Left cardiac atrium (tissue), 4 donors: ENCODE measurements at regions of chr10 and their contacts with region 1.

Region 1: GRCh38 chr10:11270135-11270857 is 252.6 kb downstream of the CELF2 start:
- DNase-seq: peak; percentile 84
- ATAC-seq: peak; percentile 96

Region 2: GRCh38 chr10:9608602-9609001 is 1661.7 kb before region 1 on chr10:
- intact Hi-C with region 1: loop called in 1 of 2 experiments (anchors 5 kb)
- DNase-seq: no peak
- ATAC-seq: no peak

Region 3: GRCh38 chr10:10722422-10722821 is 547.9 kb before region 1 on chr10:
- intact Hi-C with region 1: loop called in 1 of 2 experiments (anchors 10 kb)
- DNase-seq: no peak
- ATAC-seq: no peak

Region 4: GRCh38 chr10:10959666-10960065 is 310.6 kb before region 1 on chr10:
- intact Hi-C with region 1: loop called in 1 of 2 experiments (anchors 10 kb)
- DNase-seq: no peak
- ATAC-seq: no peak

Region 5: DNA sequence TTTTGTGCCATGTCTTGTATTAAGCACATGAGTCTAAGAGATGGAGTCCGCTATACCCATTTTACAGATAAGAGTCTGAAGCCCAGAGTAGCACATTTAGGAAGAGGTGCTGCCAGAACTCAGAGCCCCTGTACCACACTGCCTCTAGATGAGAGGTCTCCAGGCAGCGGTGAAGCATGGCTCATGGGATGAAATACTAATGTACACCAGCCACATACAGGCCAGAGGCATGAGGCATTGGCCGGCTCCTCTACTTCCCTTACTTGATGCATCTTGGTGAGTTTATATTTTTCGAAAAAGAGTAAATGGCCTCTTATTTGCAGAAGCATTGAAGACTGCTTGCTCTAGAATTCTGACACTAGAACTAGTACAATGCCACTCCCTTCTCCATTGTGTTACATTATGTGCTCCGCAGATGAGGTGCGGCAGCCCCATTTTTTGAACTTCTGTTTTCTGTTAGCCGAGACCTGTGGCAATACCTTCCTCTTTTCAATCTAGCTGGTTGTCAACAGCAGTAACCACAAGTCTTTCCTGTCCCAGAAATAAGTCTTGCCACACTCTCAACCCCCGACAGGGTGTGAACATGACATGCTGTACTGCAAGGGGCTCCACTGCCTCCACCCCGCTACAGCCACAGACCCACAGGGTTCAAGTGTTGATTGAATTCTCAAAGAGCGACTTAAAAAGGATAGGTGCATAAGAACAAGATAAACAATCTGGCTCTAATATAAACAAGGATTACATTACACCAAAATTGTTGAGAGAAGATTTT is 107.3 kb before region 1 on chr10:
- intact Hi-C with region 1: no loop called
- DNase-seq: peak; percentile 42
- ATAC-seq: peak; percentile 17 to 24

Region 6: GRCh38 chr10:11328264-11329061 is 58.2 kb after region 1 on chr10:
- intact Hi-C with region 1: no loop called
- DNase-seq: no peak
- ATAC-seq: peak; percentile 28 to 70